ENCODE measurements at regions of chr1 and their contacts with region 1.

Region 1: DNA sequence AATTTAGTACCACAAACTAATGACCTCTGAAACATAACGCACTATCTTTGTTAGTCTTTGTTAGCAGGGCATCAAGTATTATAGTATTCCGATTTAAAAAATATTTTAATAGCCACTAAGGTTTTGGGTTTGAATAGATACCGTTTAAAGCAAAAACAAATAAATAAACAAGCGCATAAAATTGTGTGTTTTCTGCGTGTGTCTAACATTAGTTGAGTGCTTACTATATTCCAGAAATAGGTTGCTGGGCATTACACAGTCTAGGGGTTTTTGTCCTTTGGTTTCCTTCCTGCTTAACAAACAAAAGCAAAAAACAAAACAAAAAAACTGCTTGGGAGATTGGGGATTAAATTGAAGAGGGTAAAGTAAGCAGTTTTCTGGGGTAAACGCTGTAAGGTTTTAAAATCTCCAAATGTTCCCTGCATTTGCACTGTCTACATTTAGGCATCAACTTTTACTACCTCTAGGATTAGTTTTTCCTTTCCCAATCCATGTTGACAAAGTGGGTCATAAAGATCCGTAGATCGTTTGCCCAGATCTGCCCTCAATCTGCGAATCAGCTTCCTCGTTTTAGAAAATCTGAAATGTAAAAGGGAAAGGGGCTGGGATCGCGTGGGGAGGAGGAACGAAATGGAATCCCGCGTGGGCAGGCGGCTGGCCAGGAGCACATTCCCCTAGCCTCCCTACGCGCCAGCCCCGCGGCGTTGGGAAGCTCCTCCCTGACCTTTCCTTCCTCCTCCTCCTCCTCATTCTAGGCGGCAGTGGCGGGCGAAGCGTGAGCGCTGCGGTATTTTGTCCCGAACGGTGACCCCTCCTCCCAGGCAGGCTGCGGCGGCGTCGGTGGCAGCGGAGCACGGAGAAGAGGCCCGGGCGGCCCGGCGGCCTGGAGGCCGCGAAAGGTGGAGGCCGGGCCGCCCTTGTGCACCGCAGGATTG is at the start of gene KCTD3:
- DNase-seq: peak; percentile 74
- H3K4me3 ChIP-seq: peak within 1 kb of the TSS; percentile 29 to 94 (median 85)
- H3K27ac ChIP-seq: peak within 1 kb of the TSS; percentile 91
- H3K4me1 ChIP-seq: peaks cover 20% of the 10 kb centered on the region
- H3K27me3 ChIP-seq: no peaks in the 10 kb centered on the region
- CTCF ChIP-seq: no peak
- POLR2A ChIP-seq: peak; percentile 63
- total RNA-seq, gene KCTD3: 28.3 and 31.1 TPM in 2 replicates

Region 2: DNA sequence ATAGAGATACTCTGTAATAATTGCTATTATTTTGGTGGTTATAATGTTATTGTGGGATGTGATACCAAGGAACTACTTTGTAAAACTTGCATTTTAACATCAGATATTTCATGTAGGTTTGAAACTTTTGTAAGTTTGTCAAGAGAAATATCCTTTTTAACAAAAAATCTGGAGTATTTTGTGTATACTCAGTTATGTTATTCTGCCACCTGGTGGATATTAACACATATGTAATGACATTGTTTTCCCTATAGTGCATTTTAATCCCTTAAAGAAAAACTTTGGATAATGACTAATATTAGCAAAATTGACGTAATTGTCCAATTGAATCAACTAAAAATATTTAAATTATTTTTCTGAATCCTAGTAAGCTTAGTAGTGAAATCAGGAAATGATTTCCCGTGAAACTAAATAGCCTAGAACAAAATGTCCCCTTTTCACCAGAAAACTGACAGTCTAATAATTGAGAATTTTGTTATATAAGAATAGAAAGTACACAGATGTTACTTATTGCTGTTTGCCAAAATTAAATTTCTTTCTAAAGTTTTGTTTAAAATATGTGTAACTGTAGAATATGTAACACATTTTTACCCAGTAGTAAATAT is 39.8 kb after region 1 on chr1:
- CTCF ChIA-PET with region 1: no interaction called
- POLR2A ChIA-PET with region 1: no interaction called
- dilution Hi-C with region 1: no loop called
- intact Hi-C with region 1: loop called (anchors 2 kb)
- DNase-seq: no peak
- H3K4me3 ChIP-seq: no peak overlapping the region
- H3K27ac ChIP-seq: no peak overlapping the region
- H3K4me1 ChIP-seq: no peaks in the 10 kb centered on the region
- H3K27me3 ChIP-seq: no peaks in the 10 kb centered on the region
- CTCF ChIP-seq: peak; percentile 15
- POLR2A ChIP-seq: no peak